Ascending aorta (tissue), 2 donors: ENCODE measurements at regions of chr1 and their contacts with region 1.

Region 1: GRCh38 chr1:25743826-25744581 is 56.0 kb upstream of the SELENON start:
- DNase-seq: peak; percentile 25 to 83
- H3K4me3 ChIP-seq: peak overlapping the region in 1 of 2 donors; percentile 23
- H3K27ac ChIP-seq: peak overlapping the region; percentile 85 to 93
- H3K4me1 ChIP-seq: peaks cover 11 to 26% of the 10 kb centered on the region in 2 donors
- H3K27me3 ChIP-seq: no peaks in the 10 kb centered on the region
- CTCF ChIP-seq: peak; percentile 32 to 55 (median 36)

Region 2: DNA sequence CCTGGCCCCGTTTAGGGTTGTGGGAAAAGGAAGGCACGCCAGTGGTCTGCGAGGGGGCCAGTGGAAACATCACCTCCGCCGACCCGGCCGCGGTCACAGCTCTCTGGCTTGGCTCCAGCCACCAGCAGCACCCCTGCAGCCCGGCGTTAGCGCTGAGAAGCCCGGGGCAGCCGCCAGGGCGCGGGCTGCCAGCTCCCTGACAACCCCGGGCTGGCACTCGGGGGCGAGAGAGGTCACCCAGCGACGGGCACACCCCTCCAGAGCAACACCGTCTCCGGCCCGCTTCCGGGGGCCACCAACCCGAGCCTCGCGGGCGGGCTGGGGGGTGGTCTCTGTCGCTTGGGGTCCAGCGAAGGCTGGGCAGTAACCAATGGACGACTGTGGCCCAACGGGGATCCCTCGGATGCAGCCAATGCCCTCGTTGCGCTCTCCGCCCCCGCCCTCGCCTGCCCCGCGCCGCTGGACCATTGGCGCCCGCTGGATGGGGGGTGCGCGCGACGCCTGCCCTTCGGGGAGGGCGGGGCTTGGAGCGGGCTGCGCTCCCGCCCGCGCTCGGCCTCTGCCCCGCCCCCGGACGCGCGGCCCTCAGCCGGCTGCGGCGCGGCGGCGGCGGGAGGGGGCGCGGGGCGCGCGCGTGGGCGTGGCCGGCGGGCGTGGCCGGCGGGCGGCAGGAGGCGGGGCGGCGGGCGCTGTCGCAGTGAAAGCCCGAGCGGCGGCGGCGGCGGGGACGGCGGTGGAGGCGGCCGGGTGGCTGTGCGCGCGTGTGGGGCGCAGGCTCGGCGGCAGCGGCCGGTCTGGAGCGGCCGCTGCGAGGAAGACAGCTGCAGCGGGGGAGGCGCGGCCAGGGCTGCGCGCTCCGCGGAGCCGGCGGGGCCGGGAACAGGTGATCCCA is 127.7 kb before region 1 on chr1 and contains the start of gene MAN1C1:
- intact Hi-C with region 1: loop called (anchors 2 kb)
- DNase-seq: peak; percentile 47 to 93
- H3K4me3 ChIP-seq: peak within 1 kb of the TSS; percentile 93 to 99
- H3K27ac ChIP-seq: peak within 1 kb of the TSS; percentile 83
- H3K4me1 ChIP-seq: peaks cover 14 to 19% of the 10 kb centered on the region in 2 donors
- H3K27me3 ChIP-seq: no peaks in the 10 kb centered on the region
- CTCF ChIP-seq: peak; percentile 51 to 62 (median 53)
- total RNA-seq, gene MAN1C1: 14.3 TPM

Region 3: GRCh38 chr1:26066857-26067256 is 322.9 kb after region 1 on chr1:
- intact Hi-C with region 1: no loop called
- DNase-seq: no peak
- H3K4me3 ChIP-seq: no peak overlapping the region
- H3K27ac ChIP-seq: no peak overlapping the region
- H3K4me1 ChIP-seq: no peaks in the 10 kb centered on the region
- H3K27me3 ChIP-seq: no peaks in the 10 kb centered on the region
- CTCF ChIP-seq: no peak